T-cell (primary cell): ENCODE measurements at regions of chr5 and their contacts with region 1.

Region 1: GRCh38 chr5:56951946-56952691 is at the start of gene MIER3:
- DNase-seq: peak; percentile 53 to 87 (median 75)
- ATAC-seq: peak; percentile 93 to 99 (median 94)
- H3K4me3 ChIP-seq: peak within 1 kb of the TSS; percentile 60 to 94
- H3K4me3 Mint-ChIP-seq: peak within 1 kb of the TSS; percentile 94 to 96 (median 95)
- H3K27ac ChIP-seq: no peak within 1 kb of the TSS
- H3K27ac Mint-ChIP-seq: peak within 1 kb of the TSS; percentile 82 to 90
- H3K4me1 ChIP-seq: peaks cover 11% of the 10 kb centered on the region in 2 experiments
- H3K4me1 Mint-ChIP-seq: peaks cover 18 to 25% (median 24%) of the 10 kb centered on the region in 3 donors
- H3K27me3 ChIP-seq: peaks cover 0 to 3% of the 10 kb centered on the region in 2 experiments
- H3K27me3 Mint-ChIP-seq: peaks cover 20 to 21% of the 10 kb centered on the region in 2 donors
- total RNA-seq, gene MIER3: 21.3 to 25.9 (median 23.6) TPM

Region 2: DNA sequence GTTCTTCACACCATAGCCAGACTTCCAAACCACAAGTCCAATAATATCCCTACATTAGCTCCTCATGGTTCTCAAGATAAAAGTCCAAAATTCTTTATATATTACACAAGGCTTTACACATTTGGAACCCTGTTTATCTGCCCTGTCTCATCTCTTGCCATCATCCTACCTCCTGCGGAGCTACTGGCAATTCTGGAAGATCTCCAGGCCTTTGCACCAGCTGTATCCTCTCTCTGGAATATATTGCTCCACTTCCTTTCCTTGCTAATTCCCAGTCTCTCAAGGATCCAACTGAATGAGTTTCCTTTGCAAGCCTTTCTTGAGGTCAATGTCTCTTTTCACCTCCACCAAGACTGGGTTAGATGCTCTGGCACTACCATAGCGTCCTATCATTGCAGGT is 41.1 kb after region 1 on chr5:
- CTCF ChIA-PET with region 1: interaction called in 1 of 2 experiments, 8 read pairs
- POLR2A ChIA-PET with region 1: interaction called in 1 of 2 experiments, 17 read pairs
- DNase-seq: no peak
- ATAC-seq: no peak
- H3K4me3 ChIP-seq: no peak overlapping the region
- H3K4me3 Mint-ChIP-seq: no peak overlapping the region
- H3K27ac ChIP-seq: no peak overlapping the region
- H3K27ac Mint-ChIP-seq: no peak overlapping the region
- H3K4me1 ChIP-seq: no peaks in the 10 kb centered on the region
- H3K4me1 Mint-ChIP-seq: no peaks in the 10 kb centered on the region
- H3K27me3 ChIP-seq: no peaks in the 10 kb centered on the region
- H3K27me3 Mint-ChIP-seq: peaks cover 4 to 5% of the 10 kb centered on the region in 2 donors

Region 3: DNA sequence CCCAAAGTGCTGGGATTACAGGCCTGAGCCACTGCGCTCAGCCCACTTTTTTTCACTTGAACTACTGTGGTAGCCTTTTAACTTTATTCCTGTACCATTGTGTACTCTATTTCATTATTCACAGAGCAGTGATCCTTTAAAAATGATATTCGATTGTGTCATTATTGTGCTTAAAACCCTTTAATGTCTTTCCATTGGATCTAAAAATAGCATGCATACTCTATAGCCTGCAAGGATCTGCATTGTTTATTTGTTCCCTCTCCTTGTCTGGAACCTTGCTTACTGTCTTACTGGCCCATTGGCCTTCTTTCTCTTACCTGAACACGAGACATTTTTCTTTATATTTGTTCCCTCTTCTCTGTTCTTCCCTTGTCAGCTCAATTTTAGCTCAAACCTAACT is 237.4 kb after region 1 on chr5:
- CTCF ChIA-PET with region 1: no interaction called
- POLR2A ChIA-PET with region 1: interaction called in 1 of 2 experiments, 12 read pairs
- DNase-seq: no peak
- ATAC-seq: no peak
- H3K4me3 ChIP-seq: no peak overlapping the region
- H3K4me3 Mint-ChIP-seq: peak overlapping the region in 1 of 3 donors; percentile 46
- H3K27ac ChIP-seq: no peak overlapping the region
- H3K27ac Mint-ChIP-seq: peak overlapping the region in 1 of 2 donors; percentile 60
- H3K4me1 ChIP-seq: peaks cover 42 to 60% of the 10 kb centered on the region in 2 experiments
- H3K4me1 Mint-ChIP-seq: peaks cover 90 to 95% (median 91%) of the 10 kb centered on the region in 3 donors
- H3K27me3 ChIP-seq: no peaks in the 10 kb centered on the region
- H3K27me3 Mint-ChIP-seq: no peaks in the 10 kb centered on the region

Region 4: GRCh38 chr5:58751222-58751837 is 1799.2 kb after region 1 on chr5:
- CTCF ChIA-PET with region 1: no interaction called
- POLR2A ChIA-PET with region 1: no interaction called
- DNase-seq: no peak
- ATAC-seq: peak in 1 of 4 experiments; percentile 27
- H3K4me3 ChIP-seq: no peak overlapping the region
- H3K4me3 Mint-ChIP-seq: no peak overlapping the region
- H3K27ac ChIP-seq: no peak overlapping the region
- H3K27ac Mint-ChIP-seq: no peak overlapping the region
- H3K4me1 ChIP-seq: no peaks in the 10 kb centered on the region
- H3K4me1 Mint-ChIP-seq: no peaks in the 10 kb centered on the region
- H3K27me3 ChIP-seq: no peaks in the 10 kb centered on the region
- H3K27me3 Mint-ChIP-seq: peaks cover 4 to 5% of the 10 kb centered on the region in 2 donors